CD8-positive, alpha-beta T cell (primary cell): ENCODE measurements at regions of chr3 and their contacts with region 1.

Region 1: GRCh38 chr3:113531826-113532697 is at the start of gene SIDT1:
- DNase-seq: peak; percentile 50 to 90 (median 73)
- ATAC-seq: peak; percentile 77
- H3K4me3 ChIP-seq: peak within 1 kb of the TSS; percentile 83 to 93
- H3K4me3 Mint-ChIP-seq: peak within 1 kb of the TSS; percentile 96
- H3K27ac ChIP-seq: peak within 1 kb of the TSS; percentile 87 to 93
- H3K27ac Mint-ChIP-seq: peak within 1 kb of the TSS; percentile 97
- H3K4me1 ChIP-seq: peaks cover 43% of the 10 kb centered on the region
- H3K4me1 Mint-ChIP-seq: peaks cover 52% of the 10 kb centered on the region
- H3K27me3 ChIP-seq: no peaks in the 10 kb centered on the region
- H3K27me3 Mint-ChIP-seq: no peaks in the 10 kb centered on the region
- CTCF ChIP-seq: no peak
- total RNA-seq, gene SIDT1: 32.1 to 38.3 TPM

Region 2: DNA sequence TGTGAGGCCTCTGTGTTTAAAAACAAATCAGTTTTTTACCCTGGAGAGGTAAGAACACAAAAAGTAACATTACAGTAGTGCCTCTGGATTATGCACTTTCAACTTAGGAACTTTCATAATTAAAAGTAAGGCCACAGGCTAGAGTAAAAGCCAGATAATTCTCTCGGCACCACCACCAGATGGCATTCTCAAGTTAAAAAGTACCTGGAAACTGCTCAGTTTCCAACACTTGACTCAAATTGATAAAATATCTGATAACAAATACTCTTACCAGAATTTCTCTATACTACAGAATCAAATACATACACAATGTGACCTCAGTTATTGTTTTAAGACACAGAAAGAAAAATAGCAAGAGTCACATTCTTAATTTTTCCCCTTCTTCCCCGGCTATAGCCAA is 37.0 kb before region 1 on chr3:
- CTCF ChIA-PET with region 1: interaction called, 9 read pairs
- POLR2A ChIA-PET with region 1: no interaction called
- intact Hi-C with region 1: loop called (anchors 1 to 5 kb)
- DNase-seq: peak in 6 of 9 experiments; percentile 38 to 67 (median 54)
- ATAC-seq: no peak
- H3K4me3 ChIP-seq: no peak overlapping the region
- H3K4me3 Mint-ChIP-seq: no peak overlapping the region
- H3K27ac ChIP-seq: no peak overlapping the region
- H3K27ac Mint-ChIP-seq: no peak overlapping the region
- H3K4me1 ChIP-seq: no peaks in the 10 kb centered on the region
- H3K4me1 Mint-ChIP-seq: no peaks in the 10 kb centered on the region
- H3K27me3 ChIP-seq: no peaks in the 10 kb centered on the region
- H3K27me3 Mint-ChIP-seq: no peaks in the 10 kb centered on the region
- CTCF ChIP-seq: peak; percentile 54

Region 3: DNA sequence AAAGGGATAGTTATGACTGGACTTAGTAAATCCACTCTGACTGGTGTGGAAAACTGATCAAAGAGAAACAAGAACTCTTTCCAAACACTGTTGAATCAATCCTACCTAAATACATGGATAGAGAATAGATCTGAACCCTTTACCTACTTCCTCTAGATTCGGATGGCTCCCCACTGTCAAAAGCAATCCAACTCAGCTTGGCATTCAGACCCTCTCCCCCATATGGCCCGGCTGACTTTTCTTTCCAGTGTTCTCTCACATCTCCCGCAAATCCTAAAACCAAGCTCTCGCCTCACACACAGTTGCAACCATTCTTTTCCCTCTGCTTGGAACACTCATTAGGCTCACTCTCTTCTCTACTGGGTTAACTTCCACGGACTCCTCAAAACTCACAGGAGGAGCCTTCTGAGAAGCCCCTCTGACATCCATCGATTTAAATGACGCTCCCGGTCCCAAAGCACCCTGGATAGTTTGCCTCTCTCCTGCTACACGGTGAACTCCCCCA is 17.7 kb before region 1 on chr3:
- CTCF ChIA-PET with region 1: interaction called, 6 read pairs
- POLR2A ChIA-PET with region 1: interaction called, 36 read pairs
- intact Hi-C with region 1: loop called (anchors 1 kb)
- DNase-seq: no peak
- ATAC-seq: no peak
- H3K4me3 ChIP-seq: peak overlapping the region; percentile 82 to 96
- H3K4me3 Mint-ChIP-seq: no peak overlapping the region
- H3K27ac ChIP-seq: peak overlapping the region; percentile 89 to 91
- H3K27ac Mint-ChIP-seq: no peak overlapping the region
- H3K4me1 ChIP-seq: peaks cover 10% of the 10 kb centered on the region
- H3K4me1 Mint-ChIP-seq: peaks cover 18% of the 10 kb centered on the region
- H3K27me3 ChIP-seq: no peaks in the 10 kb centered on the region
- H3K27me3 Mint-ChIP-seq: peaks cover 3% of the 10 kb centered on the region
- CTCF ChIP-seq: no peak

Region 4: GRCh38 chr3:113546414-113546893 is 14.4 kb after region 1 on chr3:
- CTCF ChIA-PET with region 1: interaction called, 8 read pairs
- POLR2A ChIA-PET with region 1: interaction called, 3 read pairs
- intact Hi-C with region 1: loop called in 1 of 2 experiments (anchors 1 kb)
- DNase-seq: no peak
- ATAC-seq: no peak
- H3K4me3 ChIP-seq: no peak overlapping the region
- H3K4me3 Mint-ChIP-seq: peak overlapping the region; percentile 40
- H3K27ac ChIP-seq: no peak overlapping the region
- H3K27ac Mint-ChIP-seq: peak overlapping the region; percentile 67
- H3K4me1 ChIP-seq: peaks cover 9% of the 10 kb centered on the region
- H3K4me1 Mint-ChIP-seq: peaks cover 64% of the 10 kb centered on the region
- H3K27me3 ChIP-seq: no peaks in the 10 kb centered on the region
- H3K27me3 Mint-ChIP-seq: no peaks in the 10 kb centered on the region
- CTCF ChIP-seq: no peak

Region 5: DNA sequence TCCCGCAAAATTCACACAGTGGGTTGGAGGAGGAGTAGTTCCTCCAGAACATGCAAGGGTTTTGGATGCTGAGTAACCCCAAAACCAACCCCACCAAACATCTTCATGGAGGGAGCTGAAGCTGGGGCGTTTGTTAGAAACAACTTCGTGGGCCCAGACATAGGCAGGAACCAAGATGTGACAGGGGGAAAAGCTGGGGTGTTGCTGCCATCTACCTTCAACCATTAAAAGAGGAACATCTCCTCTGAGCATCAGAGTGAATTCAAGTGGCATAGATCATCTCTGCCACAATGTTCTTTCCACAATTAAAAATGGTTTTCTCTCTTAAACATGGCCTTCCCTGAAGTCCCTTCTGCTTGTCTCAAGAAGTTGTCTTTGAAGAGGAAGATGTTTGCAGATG is 20.8 kb after region 1 on chr3:
- CTCF ChIA-PET with region 1: interaction called, 8 read pairs
- POLR2A ChIA-PET with region 1: interaction called, 6 read pairs
- intact Hi-C with region 1: loop called in 1 of 2 experiments (anchors 2 kb)
- DNase-seq: peak in 5 of 9 experiments; percentile 30 to 70 (median 55)
- ATAC-seq: peak; percentile 93
- H3K4me3 ChIP-seq: no peak overlapping the region
- H3K4me3 Mint-ChIP-seq: no peak overlapping the region
- H3K27ac ChIP-seq: no peak overlapping the region
- H3K27ac Mint-ChIP-seq: peak overlapping the region; percentile 12
- H3K4me1 ChIP-seq: no peaks in the 10 kb centered on the region
- H3K4me1 Mint-ChIP-seq: peaks cover 62% of the 10 kb centered on the region
- H3K27me3 ChIP-seq: no peaks in the 10 kb centered on the region
- H3K27me3 Mint-ChIP-seq: no peaks in the 10 kb centered on the region
- CTCF ChIP-seq: peak; percentile 40

Region 6: DNA sequence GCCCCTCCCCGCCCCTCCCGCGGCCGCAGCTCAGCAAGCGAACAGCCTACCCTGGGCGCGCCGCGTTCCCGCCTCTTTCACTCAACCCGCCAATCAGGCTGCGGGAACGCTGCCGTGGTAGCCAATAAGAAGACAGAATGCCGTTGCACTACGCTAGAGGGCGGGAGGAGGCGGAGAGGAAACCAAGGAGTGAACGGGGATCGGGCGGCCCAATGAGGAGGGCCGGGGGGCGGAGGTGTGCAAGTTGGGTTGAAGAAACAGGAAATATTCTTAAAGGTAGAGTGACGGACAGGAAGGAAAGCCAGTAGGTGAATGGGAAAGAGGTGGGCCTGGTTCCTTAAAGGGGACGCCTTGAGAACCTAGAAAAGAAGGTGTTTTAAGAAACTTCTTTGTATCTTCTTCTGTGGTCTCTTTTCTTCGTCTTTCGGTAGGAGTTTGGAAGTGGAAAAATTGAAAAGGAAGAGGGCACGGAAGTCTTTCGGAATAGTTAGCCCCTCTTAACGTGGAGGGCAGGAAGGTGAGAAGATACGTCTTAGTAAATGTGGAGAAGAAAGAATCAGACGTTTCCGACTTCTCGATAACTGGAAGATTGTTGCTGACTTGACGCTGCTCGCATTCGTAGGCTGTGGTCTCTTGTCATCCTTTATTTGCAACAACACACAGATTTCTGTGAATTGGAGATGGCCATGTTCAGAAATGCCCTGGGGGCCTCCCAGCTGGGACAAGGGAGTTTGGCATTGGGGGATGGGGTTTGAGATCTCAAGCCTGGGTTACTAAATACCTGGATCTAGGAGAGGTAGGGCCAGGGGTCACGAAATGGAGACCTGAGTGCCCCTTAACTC is 164.8 kb after region 1 on chr3:
- CTCF ChIA-PET with region 1: no interaction called
- POLR2A ChIA-PET with region 1: interaction called, 6 read pairs
- intact Hi-C with region 1: loop called (anchors 1 to 5 kb)
- DNase-seq: peak; percentile 96 to 100 (median 99)
- ATAC-seq: peak; percentile 84
- H3K4me3 ChIP-seq: peak overlapping the region; percentile 69 to 86
- H3K4me3 Mint-ChIP-seq: no peak overlapping the region
- H3K27ac ChIP-seq: peak overlapping the region; percentile 88 to 89
- H3K27ac Mint-ChIP-seq: no peak overlapping the region
- H3K4me1 ChIP-seq: peaks cover 32% of the 10 kb centered on the region
- H3K4me1 Mint-ChIP-seq: peaks cover 28% of the 10 kb centered on the region
- H3K27me3 ChIP-seq: no peaks in the 10 kb centered on the region
- H3K27me3 Mint-ChIP-seq: no peaks in the 10 kb centered on the region
- CTCF ChIP-seq: no peak

Region 7: DNA sequence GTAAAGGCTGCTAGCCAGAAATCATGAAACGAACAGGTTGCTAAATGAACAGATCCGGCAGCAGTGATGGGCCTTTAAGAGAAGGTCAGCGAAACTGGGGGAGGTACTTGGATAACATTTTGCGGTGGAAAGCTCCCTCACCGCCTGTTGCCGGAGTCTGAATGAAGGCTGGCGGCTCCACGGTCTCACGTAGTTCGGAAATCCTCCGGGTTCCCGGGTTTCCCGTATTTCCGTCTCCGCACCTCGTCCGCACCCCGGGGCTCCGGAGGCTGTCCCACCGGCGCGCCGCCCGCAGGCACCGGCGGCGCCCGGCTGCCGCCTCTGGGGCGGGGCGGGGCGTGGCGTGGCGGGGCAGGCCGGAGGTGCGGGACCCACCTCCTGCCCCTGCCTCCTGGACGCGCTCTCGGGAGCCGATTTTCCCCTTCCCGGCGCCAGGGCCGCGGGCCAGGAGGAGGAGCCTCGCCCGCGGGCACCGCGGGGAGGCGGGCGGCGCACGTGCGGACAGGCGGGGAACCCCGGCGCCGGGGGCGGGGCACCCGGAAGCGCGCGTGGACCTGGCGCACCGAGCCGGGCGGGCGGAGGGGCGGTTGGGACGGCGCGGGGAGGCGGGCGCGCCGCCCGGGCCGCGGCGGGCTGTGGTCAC is 415.4 kb after region 1 on chr3 and contains the start of gene ZDHHC23:
- CTCF ChIA-PET with region 1: no interaction called
- POLR2A ChIA-PET with region 1: no interaction called
- intact Hi-C with region 1: loop called in 1 of 2 experiments (anchors 10 kb)
- DNase-seq: peak; percentile 21 to 88 (median 63)
- ATAC-seq: peak; percentile 87
- H3K4me3 ChIP-seq: peak within 1 kb of the TSS; percentile 74 to 85
- H3K4me3 Mint-ChIP-seq: peak within 1 kb of the TSS; percentile 86
- H3K27ac ChIP-seq: no peak within 1 kb of the TSS
- H3K27ac Mint-ChIP-seq: peak within 1 kb of the TSS; percentile 84
- H3K4me1 ChIP-seq: peaks cover 8% of the 10 kb centered on the region
- H3K4me1 Mint-ChIP-seq: peaks cover 10% of the 10 kb centered on the region
- H3K27me3 ChIP-seq: no peaks in the 10 kb centered on the region
- H3K27me3 Mint-ChIP-seq: peaks cover 21% of the 10 kb centered on the region
- CTCF ChIP-seq: no peak
- total RNA-seq, gene ZDHHC23: 2.1 to 4.7 TPM